Activated naive CD4-positive, alpha-beta T cell treated with anti-CD3 and anti-CD28 coated beads for 36 hours (primary cell): ENCODE measurements at regions of chr10 and their contacts with region 1.

Region 1: DNA sequence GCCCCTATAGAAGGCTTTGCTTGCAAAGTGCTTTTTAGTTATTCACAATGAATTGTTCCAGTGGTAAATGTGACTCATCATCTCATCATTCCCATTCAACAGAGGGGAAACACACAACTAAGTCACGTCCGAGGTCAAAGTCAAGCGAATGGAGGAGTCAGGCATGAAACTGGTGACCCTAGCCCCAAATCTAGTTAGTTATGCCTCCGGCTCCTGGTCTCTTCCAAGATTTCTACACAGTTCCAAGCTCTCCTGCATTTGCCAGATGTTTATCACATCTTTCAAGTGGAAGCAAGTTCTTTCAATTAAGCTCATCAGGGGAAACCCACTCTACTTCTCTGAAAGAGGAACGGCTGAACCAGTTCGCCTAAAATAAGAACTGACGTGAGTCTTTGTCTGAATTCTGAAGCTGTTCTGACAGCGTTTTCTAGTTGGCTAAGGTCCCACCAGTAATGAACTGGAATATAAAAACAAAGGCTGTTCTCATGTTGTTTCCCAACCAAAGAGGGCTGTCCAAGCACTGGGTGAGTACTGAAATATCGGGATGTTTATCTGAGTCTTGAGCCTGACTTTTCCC is 140.9 kb upstream of the NRBF2 start:
- DNase-seq: peak; percentile 24
- H3K4me3 Mint-ChIP-seq: peak overlapping the region; percentile 1
- H3K27ac Mint-ChIP-seq: peak overlapping the region; percentile 71
- H3K4me1 Mint-ChIP-seq: peaks cover 43% of the 10 kb centered on the region
- H3K27me3 Mint-ChIP-seq: peaks cover 3% of the 10 kb centered on the region

Region 2: GRCh38 chr10:62025901-62026879 is 966.0 kb before region 1 on chr10:
- CTCF ChIA-PET with region 1: no interaction called
- intact Hi-C with region 1: loop called (anchors 10 kb)
- DNase-seq: no peak
- H3K4me3 Mint-ChIP-seq: no peak overlapping the region
- H3K27ac Mint-ChIP-seq: peak overlapping the region; percentile 68
- H3K4me1 Mint-ChIP-seq: peaks cover 91% of the 10 kb centered on the region
- H3K27me3 Mint-ChIP-seq: no peaks in the 10 kb centered on the region

Region 3: GRCh38 chr10:62811159-62811875 is 180.9 kb before region 1 on chr10:
- CTCF ChIA-PET with region 1: no interaction called
- intact Hi-C with region 1: loop called (anchors 1 kb)
- DNase-seq: peak; percentile 91
- H3K4me3 Mint-ChIP-seq: peak overlapping the region; percentile 30
- H3K27ac Mint-ChIP-seq: peak overlapping the region; percentile 79
- H3K4me1 Mint-ChIP-seq: peaks cover 78% of the 10 kb centered on the region
- H3K27me3 Mint-ChIP-seq: no peaks in the 10 kb centered on the region

Region 4: DNA sequence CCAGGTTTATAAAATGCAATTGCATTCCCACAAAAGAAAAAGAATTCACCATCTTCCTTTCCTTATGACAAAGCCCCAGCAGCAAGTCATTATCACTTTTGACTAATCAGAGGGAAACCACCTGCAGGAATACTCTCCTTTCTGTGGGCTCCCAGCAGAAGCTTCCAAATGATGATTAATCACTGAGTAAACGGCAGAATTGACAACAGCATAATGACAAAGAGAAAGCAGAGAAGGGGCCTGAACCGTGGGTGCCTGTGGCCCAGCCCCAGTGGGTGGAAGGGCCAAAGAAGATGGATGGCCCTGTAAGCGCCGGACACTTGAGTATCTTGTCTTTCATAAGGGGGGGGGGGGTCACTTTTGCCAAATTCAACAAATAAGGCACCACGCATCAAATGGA is 11.5 kb before region 1 on chr10:
- CTCF ChIA-PET with region 1: no interaction called
- intact Hi-C with region 1: loop called (anchors 1 kb)
- DNase-seq: peak; percentile 52
- H3K4me3 Mint-ChIP-seq: no peak overlapping the region
- H3K27ac Mint-ChIP-seq: peak overlapping the region; percentile 76
- H3K4me1 Mint-ChIP-seq: peaks cover 23% of the 10 kb centered on the region
- H3K27me3 Mint-ChIP-seq: peaks cover 8% of the 10 kb centered on the region